ENCODE measurements at regions of chr1 and their contacts with region 1.

Region 1: GRCh38 chr1:84506002-84506728 is at the starts of genes GNG5 and SPATA1:
- DNase-seq: peak; percentile 97
- H3K4me3 Mint-ChIP-seq: peak within 1 kb of the TSS; percentile 100
- H3K27ac Mint-ChIP-seq: peak within 1 kb of the TSS; percentile 98
- H3K4me1 Mint-ChIP-seq: peaks cover 27% of the 10 kb centered on the region
- H3K27me3 Mint-ChIP-seq: no peaks in the 10 kb centered on the region
- total RNA-seq, gene GNG5: 128 to 132 TPM
- total RNA-seq, gene SPATA1: 1.8 to 2.7 TPM

Region 2: DNA sequence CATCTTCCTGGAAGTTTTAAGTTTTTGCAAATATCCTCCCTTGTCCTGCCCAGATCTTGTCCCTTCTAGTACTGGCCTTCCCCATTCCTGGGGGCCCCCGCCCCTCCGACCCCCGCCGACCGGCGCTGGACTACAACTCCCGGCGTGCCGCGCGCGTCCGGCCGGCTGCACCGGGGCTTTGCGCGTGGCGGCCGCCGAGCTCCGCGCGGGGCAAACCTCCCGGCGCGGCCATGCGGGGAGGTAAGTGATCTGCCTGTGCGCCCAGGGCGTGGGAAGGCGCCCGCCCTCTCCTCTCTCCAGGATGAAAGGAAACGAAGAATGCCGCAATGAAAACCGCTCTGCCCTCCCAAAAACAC is 207.9 kb before region 1 on chr1:
- CTCF ChIA-PET with region 1: no interaction called
- intact Hi-C with region 1: loop called (anchors 1 kb)
- DNase-seq: peak; percentile 54
- H3K4me3 Mint-ChIP-seq: peak overlapping the region; percentile 81
- H3K27ac Mint-ChIP-seq: peak overlapping the region; percentile 28
- H3K4me1 Mint-ChIP-seq: peaks cover 35% of the 10 kb centered on the region
- H3K27me3 Mint-ChIP-seq: no peaks in the 10 kb centered on the region

Region 3: DNA sequence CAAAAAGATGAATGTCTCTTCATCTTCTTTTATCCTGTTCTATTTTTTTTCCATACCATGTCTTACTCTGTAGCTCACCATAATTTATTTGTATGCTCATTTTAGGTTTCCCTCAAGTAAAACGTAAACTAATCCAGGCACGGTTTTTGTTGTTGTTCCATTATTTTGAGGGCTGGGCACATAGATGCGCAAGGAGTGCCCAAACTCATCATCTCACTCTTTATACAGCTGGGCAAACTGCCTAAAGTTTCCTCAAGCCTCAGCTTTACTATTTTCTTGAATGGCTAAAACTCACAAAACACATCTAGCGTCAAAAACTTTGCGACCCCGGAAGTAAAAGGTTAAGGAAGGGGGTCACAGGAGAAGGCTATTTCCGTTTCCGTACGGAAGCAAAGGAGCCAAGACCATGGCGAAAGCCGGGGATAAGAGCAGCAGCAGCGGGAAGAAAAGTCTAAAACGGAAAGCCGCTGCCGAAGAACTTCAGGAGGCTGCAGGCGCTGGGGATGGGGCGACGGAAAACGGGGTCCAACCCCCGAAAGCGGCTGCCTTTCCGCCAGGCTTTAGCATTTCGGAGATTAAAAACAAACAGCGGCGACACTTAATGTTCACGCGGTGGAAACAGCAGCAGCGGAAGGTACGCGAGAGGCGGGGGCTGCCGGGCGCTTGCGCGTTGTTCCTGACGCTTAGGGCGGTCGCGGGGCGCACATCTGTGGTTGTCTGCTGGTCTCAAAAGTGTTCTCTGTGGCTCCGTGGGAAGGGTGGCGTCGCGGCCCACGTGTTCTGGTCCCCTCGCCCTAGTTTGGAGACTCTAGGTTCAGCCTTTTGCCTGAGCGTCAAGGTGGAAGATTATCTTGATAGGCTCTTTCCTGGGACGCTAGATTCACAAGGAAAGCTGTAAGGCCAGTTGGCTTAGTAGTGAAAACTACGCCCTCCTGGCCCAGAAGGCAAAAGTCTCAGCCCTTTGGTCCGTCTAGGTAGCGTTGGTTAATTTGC is 27.0 kb before region 1 on chr1 and contains the start of gene RPF1:
- CTCF ChIA-PET with region 1: interaction called, 4 read pairs
- intact Hi-C with region 1: loop called (anchors 1 kb)
- DNase-seq: peak; percentile 74
- H3K4me3 Mint-ChIP-seq: peak within 1 kb of the TSS; percentile 99
- H3K27ac Mint-ChIP-seq: peak within 1 kb of the TSS; percentile 95
- H3K4me1 Mint-ChIP-seq: peaks cover 34% of the 10 kb centered on the region
- H3K27me3 Mint-ChIP-seq: peaks cover 18% of the 10 kb centered on the region
- total RNA-seq, gene RPF1: 57.2 to 57.6 TPM

Region 4: DNA sequence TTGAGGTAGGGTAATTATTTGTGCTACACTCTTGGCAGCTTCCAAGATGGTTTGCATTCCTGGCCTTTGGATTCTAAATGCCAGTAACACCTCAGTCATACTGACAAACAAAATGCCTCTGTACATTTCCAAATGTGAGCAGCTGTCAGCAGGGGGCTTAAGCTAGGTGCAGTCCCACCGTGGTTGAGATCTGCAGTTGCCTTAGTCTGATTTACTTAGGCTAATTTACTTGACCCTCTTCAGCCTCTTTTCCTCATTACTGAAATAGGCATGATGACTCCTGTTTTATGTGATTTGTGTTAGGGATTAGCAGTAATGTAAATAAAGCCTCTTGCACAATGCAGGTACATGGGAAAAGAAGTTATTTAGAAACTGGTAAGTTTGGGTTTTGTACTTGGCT is 13.4 kb before region 1 on chr1:
- CTCF ChIA-PET with region 1: no interaction called
- intact Hi-C with region 1: no loop called
- DNase-seq: no peak
- H3K4me3 Mint-ChIP-seq: no peak overlapping the region
- H3K27ac Mint-ChIP-seq: no peak overlapping the region
- H3K4me1 Mint-ChIP-seq: peaks cover 10% of the 10 kb centered on the region
- H3K27me3 Mint-ChIP-seq: no peaks in the 10 kb centered on the region

Region 5: DNA sequence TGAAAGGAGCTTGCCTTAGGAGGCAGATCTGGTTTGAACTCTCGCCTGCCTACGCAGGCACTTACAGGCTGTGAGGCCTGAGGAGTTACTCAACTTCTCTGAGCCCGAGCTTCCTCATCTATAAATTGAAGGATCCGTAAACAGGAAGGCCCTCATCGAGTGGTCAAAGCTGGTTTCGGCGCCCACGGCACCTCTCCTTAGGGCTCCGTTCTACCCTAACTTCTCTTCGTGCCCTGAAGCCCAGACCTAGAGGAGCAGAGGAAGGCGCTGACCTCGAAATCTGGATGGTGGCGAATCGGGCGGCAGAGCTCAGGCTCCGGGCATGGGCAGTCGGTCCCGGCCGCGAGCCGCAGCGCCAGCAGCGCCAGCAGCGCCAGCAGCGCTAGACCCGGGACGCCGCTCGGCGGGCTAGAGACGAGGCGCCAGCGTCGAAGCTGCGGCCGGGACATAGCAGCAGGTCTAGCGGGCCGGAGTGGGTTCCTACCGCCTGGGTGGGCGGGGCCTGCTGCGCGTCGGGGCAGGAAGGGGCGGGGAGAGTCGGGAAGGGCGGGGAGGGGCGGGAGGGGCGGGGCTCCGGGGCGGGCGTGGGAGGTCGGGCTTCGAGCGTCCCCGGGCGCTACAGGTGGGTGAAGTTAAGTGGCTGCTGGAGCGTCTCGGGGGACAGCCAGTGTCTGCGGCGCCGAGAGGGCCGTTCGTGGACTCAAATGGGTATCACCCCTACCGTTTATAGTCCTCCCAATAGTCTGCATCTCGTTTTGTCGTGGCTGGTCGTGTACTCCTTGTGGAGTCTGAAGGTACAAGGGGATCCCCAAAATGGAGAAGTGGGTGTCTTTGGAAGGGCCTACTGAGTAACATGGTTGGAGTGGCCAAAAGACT is 68.0 kb after region 1 on chr1 and contains the start of gene CTBS:
- CTCF ChIA-PET with region 1: interaction called, 7 read pairs
- intact Hi-C with region 1: loop called (anchors 1 kb)
- DNase-seq: peak; percentile 86
- H3K4me3 Mint-ChIP-seq: peak within 1 kb of the TSS; percentile 95
- H3K27ac Mint-ChIP-seq: peak within 1 kb of the TSS; percentile 98
- H3K4me1 Mint-ChIP-seq: peaks cover 28% of the 10 kb centered on the region
- H3K27me3 Mint-ChIP-seq: no peaks in the 10 kb centered on the region
- total RNA-seq, gene CTBS: 21.1 to 21.2 TPM

Region 6: GRCh38 chr1:84598846-84599741 is 92.9 kb after region 1 on chr1:
- CTCF ChIA-PET with region 1: no interaction called
- intact Hi-C with region 1: loop called (anchors 1 kb)
- DNase-seq: no peak
- H3K4me3 Mint-ChIP-seq: no peak overlapping the region
- H3K27ac Mint-ChIP-seq: peak overlapping the region; percentile 70
- H3K4me1 Mint-ChIP-seq: peaks cover 31% of the 10 kb centered on the region
- H3K27me3 Mint-ChIP-seq: no peaks in the 10 kb centered on the region

Region 7: DNA sequence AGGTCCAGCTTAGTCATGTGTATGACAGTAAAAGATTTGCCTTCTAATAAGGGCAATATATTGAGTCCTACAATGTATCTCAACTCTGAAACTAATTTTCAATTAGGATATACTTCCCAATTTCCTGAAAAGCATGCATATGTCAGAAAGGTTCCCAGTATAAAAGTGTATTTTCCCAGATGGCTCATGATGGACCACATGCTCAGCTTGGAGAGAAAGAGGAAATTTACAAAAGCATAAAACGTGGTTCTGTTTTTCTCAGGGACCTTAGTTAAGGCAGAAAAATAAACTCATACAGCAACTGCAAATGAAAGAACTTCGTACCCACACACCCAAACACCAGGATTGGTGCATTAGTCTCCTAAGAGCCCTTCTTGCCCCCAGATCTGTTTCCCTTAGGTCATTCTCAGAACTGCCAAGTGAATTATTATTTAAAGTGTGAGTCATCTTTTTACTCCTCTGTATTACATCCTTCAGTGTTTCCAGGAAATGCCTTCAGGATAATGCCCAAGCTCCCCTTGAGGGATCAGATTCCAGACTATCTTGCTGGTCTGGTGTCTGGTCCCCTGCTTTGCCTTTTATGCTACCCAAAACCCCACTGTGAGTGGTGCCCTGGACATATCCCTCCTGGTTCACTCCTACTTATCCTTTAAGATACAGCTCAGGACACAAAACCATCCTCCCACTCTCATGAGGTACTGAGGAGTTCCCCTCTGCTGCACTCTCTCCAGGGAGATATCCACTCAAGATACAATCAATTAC is 126.7 kb after region 1 on chr1:
- CTCF ChIA-PET with region 1: no interaction called
- intact Hi-C with region 1: no loop called
- DNase-seq: no peak
- H3K4me3 Mint-ChIP-seq: no peak overlapping the region
- H3K27ac Mint-ChIP-seq: no peak overlapping the region
- H3K4me1 Mint-ChIP-seq: no peaks in the 10 kb centered on the region
- H3K27me3 Mint-ChIP-seq: peaks cover 3% of the 10 kb centered on the region

Region 8: DNA sequence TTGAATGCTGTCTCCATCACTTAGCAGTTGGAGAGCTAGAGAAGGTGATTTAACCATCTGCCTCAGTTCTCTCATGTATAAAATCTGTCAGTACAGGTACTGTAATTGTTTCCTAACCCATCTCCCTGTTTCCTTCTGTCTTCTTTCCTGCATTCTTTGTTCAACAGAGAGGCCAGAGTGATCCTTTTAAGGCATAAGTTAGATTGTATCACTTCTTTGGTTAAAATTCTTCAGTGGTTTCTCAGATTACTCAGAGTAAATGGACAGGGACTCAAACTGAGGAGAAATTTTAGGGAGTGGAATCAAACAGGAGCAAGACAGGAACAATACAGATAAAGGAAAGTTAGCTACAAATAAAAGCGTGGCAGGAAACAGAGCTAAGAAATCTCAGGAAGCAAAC is 229.3 kb after region 1 on chr1:
- CTCF ChIA-PET with region 1: no interaction called
- intact Hi-C with region 1: no loop called
- DNase-seq: no peak
- H3K4me3 Mint-ChIP-seq: no peak overlapping the region
- H3K27ac Mint-ChIP-seq: no peak overlapping the region
- H3K4me1 Mint-ChIP-seq: no peaks in the 10 kb centered on the region
- H3K27me3 Mint-ChIP-seq: peaks cover 14% of the 10 kb centered on the region